Right ventricle myocardium inferior (tissue), 1 donor: ENCODE measurements at regions of chr9 and their contacts with region 1.

Region 1: GRCh38 chr9:130712564-130713285 is 19.1 kb downstream of the EXOSC2 start:
- DNase-seq: peak; percentile 99
- ATAC-seq: peak; percentile 97

Region 2: GRCh38 chr9:130607640-130608420 is 104.9 kb before region 1 on chr9:
- intact Hi-C with region 1: no loop called
- DNase-seq: no peak
- ATAC-seq: no peak

Region 3: GRCh38 chr9:130770679-130771442 is 58.1 kb after region 1 on chr9:
- intact Hi-C with region 1: loop called (anchors 5 kb)
- DNase-seq: no peak
- ATAC-seq: peak; percentile 54

Region 4: DNA sequence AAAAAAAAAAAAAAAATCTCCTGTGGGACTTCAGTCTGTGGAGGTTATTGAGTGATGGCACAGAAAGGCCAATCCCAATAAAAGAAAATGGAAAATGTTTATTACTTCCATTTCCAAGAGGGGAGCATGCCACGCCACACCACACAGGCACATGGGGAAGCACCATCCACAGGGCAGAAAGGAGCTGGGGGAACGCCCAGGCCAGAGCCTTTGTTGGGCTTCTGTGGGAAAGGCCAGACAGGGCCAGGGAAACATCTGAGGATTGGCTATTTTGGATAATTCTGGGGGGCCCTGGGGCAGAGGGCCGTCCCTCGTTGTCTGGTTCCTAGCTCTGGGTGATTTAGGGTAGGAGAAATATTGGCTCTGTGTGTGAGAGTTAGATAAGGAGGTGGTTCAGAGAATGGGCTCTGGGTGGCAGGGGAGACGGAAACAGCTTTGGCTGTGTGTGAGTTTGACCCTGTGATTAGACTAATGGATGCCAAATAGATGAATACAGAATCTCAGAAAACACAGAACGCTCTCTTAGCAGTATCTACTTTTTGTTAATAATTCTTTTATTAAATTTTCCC is 73.3 kb after region 1 on chr9:
- intact Hi-C with region 1: loop called (anchors 5 kb)
- DNase-seq: no peak
- ATAC-seq: no peak

Region 5: DNA sequence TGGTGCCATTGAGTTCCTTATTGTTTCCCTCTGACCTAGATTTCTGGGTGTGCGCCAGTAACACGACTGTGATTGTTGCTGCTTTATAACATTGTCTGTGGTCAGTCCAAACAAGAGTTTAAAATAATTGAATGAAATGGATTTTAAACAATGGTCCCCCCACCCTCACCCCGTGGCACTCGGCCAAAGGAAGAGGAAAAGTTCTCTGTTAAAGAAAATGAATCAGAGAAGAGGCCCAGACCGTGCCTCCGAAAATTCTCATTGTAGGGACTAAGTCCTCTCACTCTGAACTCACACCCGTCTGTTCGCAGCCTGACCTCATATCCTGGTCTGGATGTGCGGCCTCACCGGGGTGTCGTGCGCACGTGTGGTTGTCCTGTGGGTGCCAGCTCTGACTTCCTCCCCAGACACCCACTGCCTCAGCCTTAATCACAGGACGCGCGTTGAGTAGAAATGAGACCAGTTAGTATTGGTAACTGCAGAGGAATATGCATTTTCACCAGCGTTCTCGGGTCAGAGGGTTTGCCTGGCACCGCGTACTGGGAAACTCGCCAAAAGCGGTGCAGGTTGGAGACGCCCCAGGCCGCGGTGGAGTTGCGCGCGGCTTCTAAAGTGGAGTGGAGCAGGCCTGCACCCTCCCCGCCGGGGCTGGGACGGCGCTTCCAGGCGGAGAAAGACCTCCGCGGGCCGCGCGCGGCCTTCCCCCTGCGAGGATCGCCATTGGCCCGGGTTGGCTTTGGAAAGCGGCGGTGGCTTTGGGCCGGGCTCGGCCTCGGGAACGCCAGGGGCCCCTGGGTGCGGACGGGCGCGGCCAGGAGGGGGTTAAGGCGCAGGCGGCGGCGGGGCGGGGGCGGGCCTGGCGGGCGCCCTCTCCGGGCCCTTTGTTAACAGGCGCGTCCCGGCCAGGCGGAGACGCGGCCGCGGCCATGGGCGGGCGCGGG is 121.9 kb after region 1 on chr9 and contains the start of gene ABL1:
- intact Hi-C with region 1: loop called (anchors 10 kb)
- DNase-seq: peak; percentile 81
- ATAC-seq: peak; percentile 89
- total RNA-seq, gene ABL1: 33.0 TPM

Region 6: DNA sequence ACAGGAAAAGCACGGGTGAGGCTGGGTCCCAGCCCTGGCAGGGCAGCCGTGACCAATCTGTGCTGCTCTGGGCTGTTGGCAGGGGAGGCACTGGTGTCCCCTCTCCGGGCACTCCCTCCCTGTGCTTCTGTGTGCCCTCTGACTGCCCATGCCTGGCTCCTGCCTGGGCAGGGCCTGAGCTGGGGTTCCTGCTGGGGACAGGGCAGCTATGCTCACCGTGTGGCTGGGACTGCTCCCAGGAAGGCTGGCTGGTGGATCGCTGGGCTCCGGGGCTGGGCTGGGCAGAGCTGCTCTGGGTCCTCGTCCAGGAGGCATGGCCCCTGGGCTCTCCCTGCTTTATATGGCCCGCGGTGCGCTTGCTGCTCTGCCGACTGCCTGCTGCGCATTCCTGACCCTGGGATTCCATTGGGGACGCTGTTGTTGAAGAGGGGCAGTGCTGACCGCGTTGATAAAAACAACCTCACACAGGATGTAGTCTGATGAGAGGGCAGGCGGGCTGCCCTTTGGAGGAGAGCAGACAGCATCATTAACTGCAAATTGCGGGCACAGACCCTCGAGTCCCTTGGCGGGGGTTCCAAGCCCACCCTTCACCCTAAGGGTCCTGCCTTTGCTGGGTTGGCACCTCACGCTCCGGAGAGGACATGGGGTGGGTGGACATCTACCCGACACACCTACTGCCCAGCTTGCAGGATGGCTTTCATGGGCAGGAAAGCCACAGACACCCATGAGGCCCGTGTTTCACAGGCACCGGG is 182.9 kb after region 1 on chr9:
- intact Hi-C with region 1: no loop called
- DNase-seq: peak; percentile 69
- ATAC-seq: peak; percentile 41

Region 7: GRCh38 chr9:130940693-130941576 is 228.2 kb after region 1 on chr9:
- intact Hi-C with region 1: loop called (anchors 2 kb)
- DNase-seq: peak; percentile 83
- ATAC-seq: peak; percentile 64